CD4-positive, alpha-beta T cell (primary cell): ENCODE measurements at regions of chr3 and their contacts with region 1.

Region 1: GRCh38 chr3:157088601-157089454 is 71.1 kb downstream of the CCNL1 start:
- DNase-seq: peak; percentile 88 to 97 (median 92)
- ATAC-seq: peak; percentile 83
- H3K4me3 ChIP-seq: peak overlapping the region; percentile 71
- H3K4me3 Mint-ChIP-seq: peak overlapping the region; percentile 90
- H3K27ac ChIP-seq: peak overlapping the region; percentile 92 to 93
- H3K27ac Mint-ChIP-seq: peak overlapping the region; percentile 99
- H3K4me1 ChIP-seq: peaks cover 31% of the 10 kb centered on the region
- H3K4me1 Mint-ChIP-seq: peaks cover 20% of the 10 kb centered on the region
- H3K27me3 ChIP-seq: no peaks in the 10 kb centered on the region
- H3K27me3 Mint-ChIP-seq: no peaks in the 10 kb centered on the region
- CTCF ChIP-seq: peak; percentile 14

Region 2: GRCh38 chr3:156483961-156484787 is 604.7 kb before region 1 on chr3:
- CTCF ChIA-PET with region 1: no interaction called
- POLR2A ChIA-PET with region 1: no interaction called
- intact Hi-C with region 1: loop called in 1 of 2 experiments (anchors 1 kb)
- DNase-seq: peak; percentile 10 to 86 (median 36)
- ATAC-seq: peak; percentile 84
- H3K4me3 ChIP-seq: peak overlapping the region; percentile 31
- H3K4me3 Mint-ChIP-seq: peak overlapping the region; percentile 20
- H3K27ac ChIP-seq: peak overlapping the region; percentile 66 to 75
- H3K27ac Mint-ChIP-seq: peak overlapping the region; percentile 80
- H3K4me1 ChIP-seq: peaks cover 16% of the 10 kb centered on the region
- H3K4me1 Mint-ChIP-seq: peaks cover 40% of the 10 kb centered on the region
- H3K27me3 ChIP-seq: no peaks in the 10 kb centered on the region
- H3K27me3 Mint-ChIP-seq: no peaks in the 10 kb centered on the region
- CTCF ChIP-seq: no peak

Region 3: GRCh38 chr3:156816800-156817645 is 271.8 kb before region 1 on chr3:
- CTCF ChIA-PET with region 1: interaction called, 3 read pairs
- POLR2A ChIA-PET with region 1: interaction called, 11 read pairs
- intact Hi-C with region 1: loop called (anchors 5 kb)
- DNase-seq: peak; percentile 66 to 97 (median 84)
- ATAC-seq: peak; percentile 81
- H3K4me3 ChIP-seq: peak overlapping the region; percentile 74
- H3K4me3 Mint-ChIP-seq: peak overlapping the region; percentile 93
- H3K27ac ChIP-seq: peak overlapping the region; percentile 65 to 74
- H3K27ac Mint-ChIP-seq: peak overlapping the region; percentile 89
- H3K4me1 ChIP-seq: peaks cover 24% of the 10 kb centered on the region
- H3K4me1 Mint-ChIP-seq: peaks cover 38% of the 10 kb centered on the region
- H3K27me3 ChIP-seq: no peaks in the 10 kb centered on the region
- H3K27me3 Mint-ChIP-seq: no peaks in the 10 kb centered on the region
- CTCF ChIP-seq: no peak

Region 4: GRCh38 chr3:157045238-157045850 is 43.5 kb before region 1 on chr3:
- CTCF ChIA-PET with region 1: no interaction called
- POLR2A ChIA-PET with region 1: no interaction called
- intact Hi-C with region 1: no loop called
- DNase-seq: no peak
- ATAC-seq: no peak
- H3K4me3 ChIP-seq: no peak overlapping the region
- H3K4me3 Mint-ChIP-seq: no peak overlapping the region
- H3K27ac ChIP-seq: no peak overlapping the region
- H3K27ac Mint-ChIP-seq: no peak overlapping the region
- H3K4me1 ChIP-seq: no peaks in the 10 kb centered on the region
- H3K4me1 Mint-ChIP-seq: no peaks in the 10 kb centered on the region
- H3K27me3 ChIP-seq: no peaks in the 10 kb centered on the region
- H3K27me3 Mint-ChIP-seq: peaks cover 18% of the 10 kb centered on the region
- CTCF ChIP-seq: no peak

Region 5: GRCh38 chr3:157104928-157105652 is 16.3 kb after region 1 on chr3:
- CTCF ChIA-PET with region 1: no interaction called
- POLR2A ChIA-PET with region 1: interaction called, 19 read pairs
- intact Hi-C with region 1: no loop called
- DNase-seq: peak in 4 of 14 experiments; percentile 16 to 58 (median 48)
- ATAC-seq: peak; percentile 60
- H3K4me3 ChIP-seq: no peak overlapping the region
- H3K4me3 Mint-ChIP-seq: no peak overlapping the region
- H3K27ac ChIP-seq: peak overlapping the region in 1 of 2 donors; percentile 14
- H3K27ac Mint-ChIP-seq: peak overlapping the region; percentile 60
- H3K4me1 ChIP-seq: peaks cover 31% of the 10 kb centered on the region
- H3K4me1 Mint-ChIP-seq: peaks cover 26% of the 10 kb centered on the region
- H3K27me3 ChIP-seq: no peaks in the 10 kb centered on the region
- H3K27me3 Mint-ChIP-seq: no peaks in the 10 kb centered on the region
- CTCF ChIP-seq: no peak